Calu3 (cell line): ENCODE measurements at regions of chr22 and their contacts with region 1.

Region 1: DNA sequence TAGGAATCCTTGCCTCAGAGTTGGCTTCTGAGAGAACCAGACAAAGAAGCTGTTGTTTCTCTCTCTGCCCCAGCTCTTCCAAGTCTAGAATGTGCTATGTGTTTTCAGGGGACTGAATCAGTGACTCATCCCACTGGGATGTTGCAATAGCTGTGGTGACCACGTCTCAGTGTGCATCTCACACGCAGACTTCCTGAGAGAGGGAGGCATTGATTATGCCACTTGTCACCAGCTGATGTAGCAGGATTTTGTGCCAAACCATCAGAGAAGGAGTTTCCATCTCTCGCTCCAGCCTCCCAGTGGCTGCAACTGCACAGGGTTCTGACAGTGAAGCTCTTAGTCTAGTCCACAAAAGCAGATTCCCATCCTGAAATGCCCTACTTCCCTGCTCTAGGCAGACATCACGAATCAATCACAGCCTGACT is 455.8 kb downstream of the MIAT start:
- DNase-seq: peak; percentile 87
- H3K4me3 Mint-ChIP-seq: peak overlapping the region; percentile 41
- H3K27ac Mint-ChIP-seq: peak overlapping the region; percentile 99
- H3K4me1 Mint-ChIP-seq: peaks cover 82% of the 10 kb centered on the region
- H3K27me3 Mint-ChIP-seq: no peaks in the 10 kb centered on the region
- CTCF ChIP-seq: no peak

Region 2: DNA sequence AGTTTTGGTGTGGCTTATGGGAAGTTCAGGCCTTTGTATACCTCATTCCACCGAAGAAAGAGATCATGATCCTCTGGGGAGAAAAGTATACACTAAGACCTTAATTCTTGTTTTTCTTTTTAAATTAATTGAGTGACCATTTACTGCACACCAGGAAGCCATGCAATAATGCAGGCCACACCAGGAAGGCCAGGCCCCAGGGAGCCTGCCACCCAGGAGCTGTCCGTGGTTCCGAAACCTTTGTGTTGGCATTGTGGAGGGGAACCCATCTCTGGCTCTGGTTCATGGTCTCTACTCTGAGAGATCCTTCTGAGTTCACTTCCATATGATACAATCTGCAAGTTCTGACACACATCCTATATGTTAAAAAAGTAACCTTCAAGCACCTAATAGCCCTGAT is 164.0 kb before region 1 on chr22:
- CTCF ChIA-PET with region 1: no interaction called
- intact Hi-C with region 1: no loop called
- DNase-seq: peak; percentile 32
- H3K4me3 Mint-ChIP-seq: no peak overlapping the region
- H3K27ac Mint-ChIP-seq: no peak overlapping the region
- H3K4me1 Mint-ChIP-seq: no peaks in the 10 kb centered on the region
- H3K27me3 Mint-ChIP-seq: peaks cover 41% of the 10 kb centered on the region
- CTCF ChIP-seq: no peak

Region 3: DNA sequence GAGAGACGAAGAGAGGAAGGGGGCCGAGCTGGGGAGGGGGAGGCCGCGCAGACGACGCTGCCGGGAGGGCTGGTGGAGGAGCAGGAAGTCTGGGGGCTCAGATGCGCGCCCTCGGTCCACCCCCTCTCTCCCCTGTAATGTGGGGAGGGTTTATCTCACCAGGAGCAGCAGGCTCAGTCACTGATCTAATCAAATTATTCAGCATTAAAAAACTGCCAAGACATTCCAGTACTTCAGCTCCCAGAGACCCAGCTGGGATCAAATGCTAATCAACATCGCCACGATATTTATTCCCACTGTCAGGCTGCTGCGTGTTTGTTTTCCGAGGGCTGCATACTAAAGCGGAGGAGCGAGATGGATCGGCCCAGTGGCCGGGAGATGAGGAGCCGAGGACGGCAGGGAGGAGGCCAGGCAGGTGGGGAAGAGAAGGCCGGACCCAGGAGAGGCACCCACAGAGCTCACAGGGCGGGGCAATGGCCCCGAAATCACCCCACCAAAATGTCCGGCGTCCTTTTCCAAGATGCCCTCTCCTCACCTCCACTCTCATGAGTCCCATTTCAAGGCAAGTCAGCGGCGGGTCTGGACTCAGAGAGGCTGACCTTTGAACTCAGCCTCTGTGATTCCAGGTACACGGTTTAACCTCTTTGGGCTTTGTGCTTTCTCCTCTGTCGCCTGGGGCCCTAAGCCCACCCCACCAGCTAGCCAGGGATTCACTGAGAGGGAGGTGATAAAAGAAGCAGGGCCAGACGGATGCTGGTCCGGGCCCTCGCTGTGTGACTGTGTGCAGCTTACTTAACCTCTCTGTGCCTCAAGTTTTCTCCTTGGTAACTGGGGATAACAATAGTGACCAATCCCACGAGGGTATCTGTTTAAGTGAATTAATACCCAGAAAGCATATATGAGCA is 186.2 kb after region 1 on chr22:
- CTCF ChIA-PET with region 1: no interaction called
- intact Hi-C with region 1: loop called (anchors 10 kb)
- DNase-seq: no peak
- H3K4me3 Mint-ChIP-seq: no peak overlapping the region
- H3K27ac Mint-ChIP-seq: no peak overlapping the region
- H3K4me1 Mint-ChIP-seq: peaks cover 18% of the 10 kb centered on the region
- H3K27me3 Mint-ChIP-seq: peaks cover 65% of the 10 kb centered on the region
- CTCF ChIP-seq: no peak